ENCODE measurements at regions of chr12 and their contacts with region 1.

Region 1: GRCh38 chr12:70242695-70243509 is at the start of gene CNOT2:
- DNase-seq: peak; percentile 85 to 86
- H3K4me3 ChIP-seq: peak within 1 kb of the TSS; percentile 87 to 97 (median 95)
- H3K27ac ChIP-seq: peak within 1 kb of the TSS; percentile 94 to 97 (median 96)
- H3K4me1 ChIP-seq: peaks cover 28 to 31% of the 10 kb centered on the region in 2 donors
- H3K27me3 ChIP-seq: no peaks in the 10 kb centered on the region
- CTCF ChIP-seq: peak in 1 of 6 experiments; percentile 3
- POLR2A ChIP-seq: peak in 1 of 2 donors; percentile 57
- total RNA-seq, gene CNOT2: 162 to 245 (median 173) TPM

Region 2: DNA sequence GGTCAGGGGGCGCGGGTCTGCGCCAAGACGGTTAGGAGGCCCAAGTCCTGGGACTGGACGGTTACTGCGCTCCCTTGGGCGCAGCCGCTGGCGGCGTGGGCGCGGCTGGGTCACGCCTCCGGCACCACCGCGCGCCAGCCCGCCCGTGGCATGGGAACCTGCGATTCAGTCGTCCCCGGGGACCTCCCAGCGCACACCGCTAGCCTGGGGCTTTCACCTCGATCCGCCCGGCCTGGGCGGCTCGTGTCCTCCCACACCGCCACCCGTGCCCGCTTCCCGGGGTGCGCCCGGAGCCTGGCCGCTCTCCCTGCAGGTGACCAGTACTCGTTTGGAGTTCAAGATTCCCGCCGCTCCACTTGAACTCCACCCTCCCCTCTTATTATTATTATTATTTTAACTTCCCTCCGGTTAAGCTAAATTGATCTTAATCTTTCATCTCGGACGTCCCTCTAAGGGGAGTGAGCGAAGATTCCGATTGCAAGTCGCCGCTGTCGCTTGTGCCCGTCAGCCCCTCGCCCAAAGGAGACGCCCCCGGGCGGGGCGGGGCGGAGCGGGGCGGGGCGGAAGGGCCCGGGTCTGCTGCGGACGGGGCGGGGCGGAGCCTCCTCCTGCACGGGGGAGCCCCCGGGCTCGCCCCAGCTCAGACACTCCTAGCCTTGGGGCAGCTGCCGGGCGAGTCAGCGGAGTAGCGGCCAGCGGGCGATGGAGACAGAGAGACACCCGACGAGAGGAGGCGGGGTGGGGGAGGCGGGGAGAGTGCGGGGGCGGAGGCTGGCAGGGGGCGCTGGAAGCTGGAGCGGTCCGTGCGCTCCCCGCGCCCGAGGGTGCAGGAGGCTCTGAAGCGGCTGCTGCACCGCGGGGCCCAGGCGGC is 123.0 kb after region 1 on chr12 and contains the start of gene KCNMB4:
- intact Hi-C with region 1: loop called (anchors 5 kb)
- DNase-seq: peak; percentile 64 to 70
- H3K4me3 ChIP-seq: peak within 1 kb of the TSS; percentile 46 to 82 (median 58)
- H3K27ac ChIP-seq: peak within 1 kb of the TSS in 2 of 3 donors; percentile 55 to 75
- H3K4me1 ChIP-seq: peaks cover 7 to 14% of the 10 kb centered on the region in 2 donors
- H3K27me3 ChIP-seq: no peaks in the 10 kb centered on the region
- CTCF ChIP-seq: no peak
- POLR2A ChIP-seq: peak in 1 of 2 donors; percentile 33
- total RNA-seq, gene KCNMB4: 2.1 to 5.1 (median 3.8) TPM

Measured in thyroid gland (tissue), 4 donors.